ENCODE measurements at regions of chr17 and their contacts with region 1.

Region 1: DNA sequence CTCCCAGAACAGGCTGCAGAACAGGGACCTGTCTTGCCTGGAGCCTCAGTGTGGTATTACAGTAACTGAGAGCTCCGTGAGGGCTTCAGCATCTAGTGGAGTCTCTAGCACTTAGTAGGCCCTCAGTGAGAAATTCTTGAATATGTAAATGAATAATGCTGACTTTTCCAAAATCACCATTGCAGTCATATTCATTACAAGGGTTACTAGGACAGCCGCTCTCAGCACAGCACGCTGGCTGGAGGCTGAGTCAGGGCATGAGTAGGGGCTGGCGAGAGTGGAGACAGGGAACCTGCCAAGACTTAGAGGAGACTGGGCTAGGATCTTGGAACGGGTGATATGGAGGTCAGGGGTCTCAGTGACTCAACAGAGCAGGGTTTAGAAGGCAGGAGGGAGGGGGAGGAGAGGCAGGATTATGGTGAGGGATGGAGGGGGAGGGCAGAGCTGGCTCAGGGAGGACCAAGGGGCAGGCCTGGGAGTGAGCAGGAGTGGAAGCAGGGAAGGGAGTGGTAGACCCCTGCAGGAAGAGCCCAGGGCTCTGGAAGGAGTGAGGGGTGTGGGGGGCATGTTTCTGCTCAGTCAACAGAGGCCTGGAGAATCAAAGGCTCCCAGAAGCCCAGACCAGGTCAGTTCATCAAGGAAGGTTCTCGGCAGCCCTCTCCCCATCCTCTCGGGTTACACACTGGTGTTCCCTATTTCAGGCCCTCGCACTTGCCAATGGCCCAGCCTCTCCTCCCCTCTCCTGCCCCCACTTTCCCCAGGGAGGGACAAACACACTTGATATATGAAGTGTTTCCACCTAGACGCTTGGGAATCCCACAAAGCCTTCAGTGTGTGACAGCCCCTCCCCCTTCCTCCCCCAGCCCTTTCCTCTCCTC is 42.3 kb downstream of the FZD2 start:
- DNase-seq: peak; percentile 58 to 72
- H3K4me3 ChIP-seq: no peak overlapping the region
- H3K27ac ChIP-seq: 0 out of 2 replicates have a peak overlapping the region, but pooled peaks have one; percentile 24
- H3K4me1 ChIP-seq: peaks cover 23% of the 10 kb centered on the region
- H3K27me3 ChIP-seq: no peaks in the 10 kb centered on the region
- CTCF ChIP-seq: no peak

Region 2: GRCh38 chr17:44556832-44557606 is 42.5 kb before region 1 on chr17 and contains the start of gene FZD2:
- CTCF ChIA-PET with region 1: no interaction called
- POLR2A ChIA-PET with region 1: no interaction called
- intact Hi-C with region 1: no loop called
- DNase-seq: peak; percentile 90 to 94
- H3K4me3 ChIP-seq: peak within 1 kb of the TSS; percentile 70
- H3K27ac ChIP-seq: peak within 1 kb of the TSS; percentile 69
- H3K4me1 ChIP-seq: peaks cover 40% of the 10 kb centered on the region
- H3K27me3 ChIP-seq: no peaks in the 10 kb centered on the region
- CTCF ChIP-seq: no peak
- total RNA-seq, gene FZD2: 50.5 and 61.8 TPM in 2 replicates

Region 3: GRCh38 chr17:44581868-44582267 is 17.7 kb before region 1 on chr17:
- CTCF ChIA-PET with region 1: interaction called, 15 read pairs
- POLR2A ChIA-PET with region 1: interaction called, 26 read pairs
- intact Hi-C with region 1: no loop called
- DNase-seq: no peak
- H3K4me3 ChIP-seq: no peak overlapping the region
- H3K27ac ChIP-seq: no peak overlapping the region
- H3K4me1 ChIP-seq: peaks cover 17% of the 10 kb centered on the region
- H3K27me3 ChIP-seq: no peaks in the 10 kb centered on the region
- CTCF ChIP-seq: peak; percentile 29; the same call in 1 of the 2 replicates

Region 4: DNA sequence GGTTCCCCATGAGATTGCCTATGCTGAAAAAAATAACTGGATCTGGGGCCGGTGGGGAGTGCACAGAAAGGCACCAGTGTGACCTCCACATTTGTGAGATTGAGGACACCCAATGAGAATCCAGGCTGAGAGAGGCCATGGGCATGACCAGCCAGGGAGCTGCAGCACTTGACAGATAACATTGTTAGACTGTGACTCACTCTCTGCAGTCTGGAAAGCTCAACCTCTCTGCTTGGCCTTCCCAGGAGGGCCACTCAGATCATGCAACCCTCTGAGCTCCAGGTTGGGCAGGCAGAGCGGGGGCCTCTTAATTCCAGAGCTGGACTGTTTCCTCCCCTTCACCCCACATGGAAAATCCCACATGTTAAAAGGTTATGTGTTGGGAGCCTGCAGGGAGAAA is 12.2 kb before region 1 on chr17:
- CTCF ChIA-PET with region 1: interaction called, 15 read pairs
- POLR2A ChIA-PET with region 1: interaction called, 26 read pairs
- intact Hi-C with region 1: no loop called
- DNase-seq: peak; percentile 84 to 93
- H3K4me3 ChIP-seq: no peak overlapping the region; the same call in 1 of the 2 replicates
- H3K27ac ChIP-seq: peak overlapping the region; percentile 55
- H3K4me1 ChIP-seq: peaks cover 32% of the 10 kb centered on the region
- H3K27me3 ChIP-seq: no peaks in the 10 kb centered on the region
- CTCF ChIP-seq: no peak